Activated naive CD4-positive, alpha-beta T cell treated with anti-CD3 and anti-CD28 coated beads for 36 hours (primary cell): ENCODE measurements at regions of chr6 and their contacts with region 1.

Region 1: GRCh38 chr6:137873273-137873762 is 6.3 kb downstream of the TNFAIP3 start:
- DNase-seq: peak; percentile 97
- H3K4me3 Mint-ChIP-seq: peak overlapping the region; percentile 89
- H3K27ac Mint-ChIP-seq: peak overlapping the region; percentile 99
- H3K4me1 Mint-ChIP-seq: peaks cover 37% of the 10 kb centered on the region
- H3K27me3 Mint-ChIP-seq: no peaks in the 10 kb centered on the region

Region 2: DNA sequence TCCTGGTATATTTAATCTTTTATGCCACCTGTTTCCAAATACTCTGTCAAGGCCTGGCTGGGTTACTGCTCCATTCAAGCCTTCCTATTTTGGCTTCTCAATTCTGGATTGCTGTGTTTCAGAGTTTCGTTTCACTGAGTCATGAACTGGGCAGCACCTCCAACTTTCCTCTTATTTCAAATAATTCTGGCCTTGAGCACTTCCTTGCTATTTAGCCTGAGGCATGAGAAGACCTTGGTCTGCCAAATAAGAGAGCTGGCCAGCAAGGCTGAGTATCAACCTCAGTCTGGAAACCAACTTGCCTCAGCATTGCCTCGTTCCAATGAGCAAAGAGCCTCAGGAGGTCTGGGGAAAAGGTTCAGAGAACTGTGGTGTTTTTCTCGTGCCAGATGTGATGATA is 60.4 kb after region 1 on chr6:
- CTCF ChIA-PET with region 1: interaction called, 156 read pairs
- intact Hi-C with region 1: no loop called
- DNase-seq: no peak
- H3K4me3 Mint-ChIP-seq: no peak overlapping the region
- H3K27ac Mint-ChIP-seq: no peak overlapping the region
- H3K4me1 Mint-ChIP-seq: peaks cover 42% of the 10 kb centered on the region
- H3K27me3 Mint-ChIP-seq: no peaks in the 10 kb centered on the region

Region 3: GRCh38 chr6:138410972-138411667 is 537.8 kb after region 1 on chr6:
- CTCF ChIA-PET with region 1: no interaction called
- intact Hi-C with region 1: loop called (anchors 10 kb)
- DNase-seq: peak; percentile 31
- H3K4me3 Mint-ChIP-seq: peak overlapping the region; percentile 1
- H3K27ac Mint-ChIP-seq: peak overlapping the region; percentile 84
- H3K4me1 Mint-ChIP-seq: peaks cover 32% of the 10 kb centered on the region
- H3K27me3 Mint-ChIP-seq: no peaks in the 10 kb centered on the region

Region 4: GRCh38 chr6:139146317-139146726 is 1273.0 kb after region 1 on chr6:
- CTCF ChIA-PET with region 1: no interaction called
- intact Hi-C with region 1: loop called (anchors 2 kb)
- DNase-seq: no peak
- H3K4me3 Mint-ChIP-seq: peak overlapping the region; percentile 61
- H3K27ac Mint-ChIP-seq: peak overlapping the region; percentile 95
- H3K4me1 Mint-ChIP-seq: peaks cover 91% of the 10 kb centered on the region
- H3K27me3 Mint-ChIP-seq: no peaks in the 10 kb centered on the region